Activated CD8-positive, alpha-beta memory T cell treated with anti-CD3 and anti-CD28 coated beads, Interleukin-2, amount 10 ng/mL, durations not matched to agents 7 days and 5 days (primary cell): ENCODE measurements at regions of chr3 and their contacts with region 1.

Region 1: GRCh38 chr3:11335056-11335608 is 62.9 kb downstream of the ATG7 start:
- DNase-seq: no peak
- ATAC-seq: peak; percentile 73
- H3K4me3 Mint-ChIP-seq: no peak overlapping the region
- H3K27ac Mint-ChIP-seq: no peak overlapping the region
- H3K4me1 Mint-ChIP-seq: peaks cover 12% of the 10 kb centered on the region
- H3K27me3 Mint-ChIP-seq: no peaks in the 10 kb centered on the region

Region 2: GRCh38 chr3:11060500-11061251 is 274.5 kb before region 1 on chr3:
- CTCF ChIA-PET with region 1: interaction called, 19 read pairs
- DNase-seq: peak; percentile 46
- ATAC-seq: peak; percentile 77
- H3K4me3 Mint-ChIP-seq: no peak overlapping the region
- H3K27ac Mint-ChIP-seq: no peak overlapping the region
- H3K4me1 Mint-ChIP-seq: peaks cover 2% of the 10 kb centered on the region
- H3K27me3 Mint-ChIP-seq: peaks cover 7% of the 10 kb centered on the region

Region 3: DNA sequence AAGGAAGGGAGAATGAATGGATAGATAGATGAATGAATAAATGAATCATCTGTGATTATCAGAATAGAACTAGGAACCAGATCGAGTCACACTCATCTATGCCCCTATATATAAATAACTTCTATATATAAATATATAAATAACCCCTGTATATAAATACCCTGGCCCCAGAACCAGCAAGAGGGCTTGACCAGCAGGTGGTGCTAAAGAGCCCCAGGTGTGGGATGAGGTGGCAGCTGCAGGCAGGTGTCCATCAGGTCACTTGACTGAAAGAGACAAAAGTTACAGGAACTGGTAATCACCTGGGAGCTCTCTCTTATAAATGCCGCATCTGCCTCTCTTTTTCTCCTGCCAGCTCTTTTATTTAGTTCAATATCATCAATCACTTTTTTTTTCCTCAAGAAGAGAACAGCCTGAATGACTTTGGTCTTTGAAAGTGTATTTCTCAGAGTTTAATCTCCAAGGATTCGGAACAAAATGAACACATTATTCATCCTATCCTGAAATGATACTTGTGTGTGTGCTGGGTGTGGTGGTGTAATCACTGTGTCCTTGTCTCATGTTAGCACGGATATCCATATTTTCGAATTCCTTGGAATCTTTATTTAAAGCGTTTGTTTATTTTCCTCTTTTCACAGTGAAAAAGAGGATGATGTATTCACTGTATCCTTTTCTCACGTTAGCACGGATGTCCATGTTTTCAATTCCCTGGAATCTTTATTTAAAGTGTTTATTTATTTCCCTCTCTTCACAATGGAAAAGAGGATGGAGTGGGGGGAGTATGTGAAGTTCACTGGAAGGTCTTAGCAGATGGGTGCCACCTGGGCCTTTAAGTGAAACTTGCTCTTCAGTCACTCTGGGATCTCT is 98.3 kb before region 1 on chr3:
- CTCF ChIA-PET with region 1: interaction called, 93 read pairs
- DNase-seq: peak; percentile 84
- ATAC-seq: peak; percentile 50
- H3K4me3 Mint-ChIP-seq: no peak overlapping the region
- H3K27ac Mint-ChIP-seq: no peak overlapping the region
- H3K4me1 Mint-ChIP-seq: peaks cover 28% of the 10 kb centered on the region
- H3K27me3 Mint-ChIP-seq: peaks cover 34% of the 10 kb centered on the region

Region 4: DNA sequence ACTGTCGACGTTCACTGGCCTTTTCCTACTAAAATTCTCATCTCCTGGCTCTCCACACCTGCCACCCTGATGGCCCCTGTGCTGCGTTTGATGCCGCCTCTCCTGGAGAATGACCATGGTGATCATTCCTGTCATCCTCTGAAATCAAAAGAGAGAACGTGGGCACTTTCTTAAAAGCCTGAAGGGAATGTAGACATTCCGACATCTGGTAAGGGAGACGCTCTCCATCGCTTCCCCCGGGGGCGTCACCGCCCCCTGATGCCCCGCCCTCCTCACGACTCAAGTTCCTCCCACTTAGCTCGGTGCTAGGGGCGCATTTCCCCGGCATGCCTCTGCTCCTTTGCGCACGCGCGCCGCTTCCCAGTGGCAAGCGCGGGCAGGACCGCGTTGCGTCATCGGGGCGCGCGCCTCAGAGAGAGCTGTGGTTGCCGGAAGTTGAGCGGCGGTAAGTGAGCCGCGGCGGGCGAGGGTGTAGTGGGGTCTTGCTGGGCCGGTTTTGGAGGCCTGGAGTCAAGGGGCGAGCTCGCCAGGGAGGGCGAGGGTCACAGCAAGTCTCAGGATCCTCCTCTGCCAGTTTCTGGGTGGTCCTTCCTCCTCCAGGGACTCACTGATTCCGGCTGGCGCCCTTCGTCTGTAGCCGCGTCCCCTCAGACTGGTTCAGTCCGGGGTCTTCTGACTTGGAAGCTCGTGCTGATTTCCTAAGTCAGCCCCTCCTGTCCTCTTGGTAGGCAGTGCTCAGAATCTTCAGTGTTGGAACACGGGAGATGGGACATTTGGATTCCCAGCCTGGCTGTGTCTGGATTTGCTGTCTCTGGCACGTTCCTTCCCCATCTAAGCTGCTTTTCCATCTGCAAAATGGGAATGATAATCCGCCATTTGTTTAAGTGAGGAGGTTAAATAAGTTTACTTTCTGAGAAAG is 62.9 kb before region 1 on chr3 and contains the start of gene ATG7:
- CTCF ChIA-PET with region 1: interaction called, 11 read pairs
- DNase-seq: peak; percentile 97
- ATAC-seq: peak; percentile 98
- H3K4me3 Mint-ChIP-seq: peak within 1 kb of the TSS; percentile 87
- H3K27ac Mint-ChIP-seq: peak within 1 kb of the TSS; percentile 88
- H3K4me1 Mint-ChIP-seq: peaks cover 47% of the 10 kb centered on the region
- H3K27me3 Mint-ChIP-seq: peaks cover 2% of the 10 kb centered on the region
- total RNA-seq, gene ATG7: 28.3 to 38.2 TPM

Region 5: DNA sequence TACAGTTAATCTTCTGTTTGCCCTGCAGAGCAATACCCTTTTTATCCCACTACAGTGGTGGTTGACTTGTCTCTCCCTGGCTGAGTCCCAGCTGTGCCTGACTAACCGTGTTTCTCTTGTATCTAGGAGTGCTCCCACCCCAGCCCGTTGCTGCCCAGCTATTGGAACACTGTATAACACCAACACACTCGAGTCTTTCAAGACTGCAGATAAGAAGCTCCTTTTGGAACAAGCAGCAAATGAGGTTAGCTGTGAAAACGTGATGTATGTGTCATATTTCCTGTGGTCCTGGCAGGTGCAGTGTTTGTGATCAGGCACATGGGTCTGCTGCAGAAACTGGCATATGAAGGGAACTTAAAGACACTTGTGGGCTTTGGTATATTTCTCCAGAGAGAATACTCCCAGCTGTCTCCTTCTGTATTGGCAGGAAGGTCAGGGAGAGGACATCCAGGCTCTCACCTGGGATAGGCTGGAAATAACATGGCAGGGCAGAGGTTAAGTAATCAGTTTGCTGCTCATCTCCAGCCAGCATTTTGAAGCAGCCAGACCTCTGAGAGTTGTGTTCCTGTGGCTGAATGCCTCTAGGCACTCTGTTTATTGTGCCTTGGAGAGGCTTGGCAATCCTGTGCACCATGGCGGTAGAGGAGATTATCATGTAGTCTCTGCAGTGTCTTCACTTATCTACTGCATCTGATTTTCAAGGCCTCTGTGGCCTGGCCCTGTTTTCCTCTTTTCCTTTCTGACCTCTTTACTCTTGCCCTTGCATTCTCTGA is 28.1 kb before region 1 on chr3:
- CTCF ChIA-PET with region 1: interaction called, 10 read pairs
- DNase-seq: peak; percentile 74
- ATAC-seq: peak; percentile 93
- H3K4me3 Mint-ChIP-seq: no peak overlapping the region
- H3K27ac Mint-ChIP-seq: peak overlapping the region; percentile 85
- H3K4me1 Mint-ChIP-seq: peaks cover 39% of the 10 kb centered on the region
- H3K27me3 Mint-ChIP-seq: no peaks in the 10 kb centered on the region

Region 6: GRCh38 chr3:11317300-11317699 is 17.8 kb before region 1 on chr3:
- CTCF ChIA-PET with region 1: interaction called, 11 read pairs
- DNase-seq: no peak
- ATAC-seq: no peak
- H3K4me3 Mint-ChIP-seq: no peak overlapping the region
- H3K27ac Mint-ChIP-seq: no peak overlapping the region
- H3K4me1 Mint-ChIP-seq: no peaks in the 10 kb centered on the region
- H3K27me3 Mint-ChIP-seq: no peaks in the 10 kb centered on the region

Region 7: DNA sequence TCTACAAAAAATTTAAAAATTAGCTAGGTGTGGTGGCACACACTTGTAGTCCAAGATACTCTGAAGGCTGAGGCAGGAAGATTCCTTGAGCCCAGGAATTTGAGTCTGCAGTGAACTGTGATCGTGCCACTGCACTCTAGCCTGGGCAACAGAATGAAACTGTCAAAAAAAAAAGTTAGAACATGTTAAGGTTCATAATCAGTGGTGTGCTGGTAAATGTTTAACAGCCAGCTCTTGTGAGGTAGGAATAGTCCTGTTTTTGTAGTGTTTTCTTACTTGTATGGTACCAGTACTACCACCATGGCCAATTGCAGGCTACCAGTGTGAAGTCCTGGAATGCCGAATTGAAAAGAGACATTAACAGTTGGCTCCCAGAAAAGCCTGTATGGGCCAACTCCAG is 12.2 kb before region 1 on chr3:
- CTCF ChIA-PET with region 1: interaction called, 11 read pairs
- DNase-seq: no peak
- ATAC-seq: no peak
- H3K4me3 Mint-ChIP-seq: no peak overlapping the region
- H3K27ac Mint-ChIP-seq: no peak overlapping the region
- H3K4me1 Mint-ChIP-seq: no peaks in the 10 kb centered on the region
- H3K27me3 Mint-ChIP-seq: no peaks in the 10 kb centered on the region

Region 8: DNA sequence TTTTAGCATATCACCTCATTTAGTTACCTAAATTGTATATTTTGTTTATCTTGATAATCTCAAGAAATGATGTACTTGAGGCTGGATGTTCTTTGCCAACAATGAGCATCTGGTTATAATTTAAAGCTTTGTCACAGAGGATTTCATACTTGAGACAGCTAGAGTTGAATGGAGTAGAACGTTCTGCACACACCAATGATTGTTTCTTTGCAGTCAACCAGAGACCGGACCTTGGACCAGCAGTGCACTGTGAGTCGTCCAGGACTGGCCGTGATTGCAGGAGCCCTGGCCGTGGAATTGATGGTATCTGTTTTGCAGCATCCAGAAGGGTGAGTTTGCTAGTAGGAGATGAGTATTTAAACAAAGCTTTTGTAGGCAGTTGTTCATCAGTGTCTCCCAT is 27.5 kb after region 1 on chr3:
- CTCF ChIA-PET with region 1: no interaction called
- DNase-seq: no peak
- ATAC-seq: no peak
- H3K4me3 Mint-ChIP-seq: no peak overlapping the region
- H3K27ac Mint-ChIP-seq: no peak overlapping the region
- H3K4me1 Mint-ChIP-seq: peaks cover 10% of the 10 kb centered on the region
- H3K27me3 Mint-ChIP-seq: no peaks in the 10 kb centered on the region

Region 9: GRCh38 chr3:11465744-11466616 is 130.8 kb after region 1 on chr3:
- CTCF ChIA-PET with region 1: no interaction called
- DNase-seq: no peak
- ATAC-seq: no peak
- H3K4me3 Mint-ChIP-seq: no peak overlapping the region
- H3K27ac Mint-ChIP-seq: no peak overlapping the region
- H3K4me1 Mint-ChIP-seq: no peaks in the 10 kb centered on the region
- H3K27me3 Mint-ChIP-seq: no peaks in the 10 kb centered on the region

Region 10: GRCh38 chr3:11969986-11970385 is 634.9 kb after region 1 on chr3:
- CTCF ChIA-PET with region 1: no interaction called
- DNase-seq: no peak
- ATAC-seq: no peak
- H3K4me3 Mint-ChIP-seq: no peak overlapping the region
- H3K27ac Mint-ChIP-seq: no peak overlapping the region
- H3K4me1 Mint-ChIP-seq: no peaks in the 10 kb centered on the region
- H3K27me3 Mint-ChIP-seq: peaks cover 13% of the 10 kb centered on the region